Activated CD4-positive, alpha-beta T cell treated with anti-CD3 and anti-CD28 coated beads for 36 hours (primary cell): ENCODE measurements at regions of chr18 and their contacts with region 1.

Region 1: GRCh38 chr18:69958422-69958821 is 10.7 kb upstream of the CD226 start:
- DNase-seq: peak; percentile 72
- ATAC-seq: peak; percentile 73
- H3K4me3 Mint-ChIP-seq: no peak overlapping the region
- H3K27ac Mint-ChIP-seq: no peak overlapping the region
- H3K4me1 Mint-ChIP-seq: peaks cover 13% of the 10 kb centered on the region
- H3K27me3 Mint-ChIP-seq: no peaks in the 10 kb centered on the region

Region 2: DNA sequence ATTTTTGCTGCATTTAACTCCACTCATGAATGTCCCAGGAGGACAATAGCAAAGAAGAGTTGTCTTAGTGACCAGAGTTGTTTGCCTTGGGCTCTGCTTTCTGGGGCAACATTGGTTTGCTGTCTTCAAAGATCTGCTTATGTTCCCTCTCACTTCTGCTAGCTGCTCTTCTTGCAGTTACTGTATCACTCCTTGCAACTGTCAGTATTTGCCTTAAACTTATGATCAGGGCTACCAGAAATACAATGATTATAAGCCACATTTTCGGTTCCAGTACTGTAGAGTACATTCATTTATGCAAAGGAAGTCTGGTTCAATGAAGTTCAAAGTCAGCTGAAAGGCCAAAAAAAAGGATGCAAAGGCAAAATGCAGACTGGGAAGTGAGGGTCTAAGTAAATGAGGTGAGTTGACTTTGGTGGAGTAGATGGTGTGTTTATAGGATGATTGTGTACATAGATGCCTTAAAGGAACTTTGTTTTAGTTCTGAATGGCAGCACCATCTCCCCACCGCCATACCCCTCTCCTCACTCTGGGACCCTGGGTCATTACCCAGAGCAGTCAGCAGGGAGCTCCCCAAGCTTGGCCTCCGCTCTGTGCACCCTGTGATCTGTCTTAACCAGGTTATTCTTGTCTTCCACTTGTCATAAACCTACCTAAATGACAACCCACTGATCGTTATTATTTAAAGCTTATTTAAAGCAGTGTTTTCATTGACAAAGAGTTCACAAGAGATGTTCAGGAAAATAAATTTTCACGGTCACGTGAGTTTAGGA is 321.7 kb before region 1 on chr18:
- CTCF ChIA-PET with region 1: no interaction called
- POLR2A ChIA-PET with region 1: no interaction called
- intact Hi-C with region 1: loop called in 1 of 2 experiments (anchors 5 kb)
- DNase-seq: peak; percentile 54
- ATAC-seq: peak; percentile 73
- H3K4me3 Mint-ChIP-seq: no peak overlapping the region
- H3K27ac Mint-ChIP-seq: no peak overlapping the region
- H3K4me1 Mint-ChIP-seq: no peaks in the 10 kb centered on the region
- H3K27me3 Mint-ChIP-seq: peaks cover 2% of the 10 kb centered on the region

Region 3: DNA sequence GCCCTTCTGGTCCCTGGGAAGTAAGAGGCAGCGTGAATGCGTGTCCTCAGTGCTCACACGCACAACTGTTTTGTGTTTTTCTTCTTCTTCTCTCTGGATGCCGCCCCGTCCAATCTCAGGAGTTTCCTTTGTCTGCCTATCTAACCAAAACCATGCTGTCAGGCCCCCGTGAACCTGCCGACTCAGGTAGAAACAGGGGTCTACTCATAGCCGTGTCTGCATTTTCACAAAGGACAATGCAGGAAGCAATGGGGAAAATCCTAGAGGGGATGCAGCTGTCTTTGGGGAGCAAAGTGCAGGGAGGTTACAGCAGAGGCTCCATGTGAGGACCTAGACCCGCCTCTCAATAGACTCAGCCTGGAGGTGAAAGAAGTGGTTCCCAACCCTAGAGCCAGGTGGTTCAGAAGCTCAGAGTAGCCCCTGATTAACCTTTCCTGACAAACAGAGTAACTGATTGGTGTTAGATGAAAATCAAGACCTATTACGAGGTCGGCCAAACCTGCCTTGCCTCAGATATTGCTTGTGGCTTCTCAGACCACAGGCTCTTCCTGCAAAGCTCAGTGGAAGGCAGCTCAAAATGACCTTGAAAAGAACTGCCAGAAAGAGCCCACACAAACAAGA is 60.1 kb before region 1 on chr18:
- CTCF ChIA-PET with region 1: interaction called, 14 read pairs
- POLR2A ChIA-PET with region 1: interaction called, 18 read pairs
- intact Hi-C with region 1: loop called (anchors 1 kb)
- DNase-seq: peak; percentile 56
- ATAC-seq: peak; percentile 17
- H3K4me3 Mint-ChIP-seq: peak overlapping the region; percentile 67
- H3K27ac Mint-ChIP-seq: peak overlapping the region; percentile 94
- H3K4me1 Mint-ChIP-seq: peaks cover 74% of the 10 kb centered on the region
- H3K27me3 Mint-ChIP-seq: no peaks in the 10 kb centered on the region

Region 4: GRCh38 chr18:69943021-69943420 is 15.4 kb before region 1 on chr18:
- CTCF ChIA-PET with region 1: interaction called, 10 read pairs
- POLR2A ChIA-PET with region 1: interaction called, 18 read pairs
- intact Hi-C with region 1: loop called in 1 of 2 experiments (anchors 1 kb)
- DNase-seq: peak; percentile 44
- ATAC-seq: peak; percentile 20
- H3K4me3 Mint-ChIP-seq: no peak overlapping the region
- H3K27ac Mint-ChIP-seq: peak overlapping the region; percentile 83
- H3K4me1 Mint-ChIP-seq: peaks cover 82% of the 10 kb centered on the region
- H3K27me3 Mint-ChIP-seq: no peaks in the 10 kb centered on the region

Region 5: GRCh38 chr18:70072678-70073077 is 114.3 kb after region 1 on chr18:
- CTCF ChIA-PET with region 1: interaction called, 3 read pairs
- POLR2A ChIA-PET with region 1: no interaction called
- intact Hi-C with region 1: loop called in 1 of 2 experiments (anchors 10 kb)
- DNase-seq: no peak
- ATAC-seq: no peak
- H3K4me3 Mint-ChIP-seq: no peak overlapping the region
- H3K27ac Mint-ChIP-seq: no peak overlapping the region
- H3K4me1 Mint-ChIP-seq: no peaks in the 10 kb centered on the region
- H3K27me3 Mint-ChIP-seq: no peaks in the 10 kb centered on the region

Region 6: DNA sequence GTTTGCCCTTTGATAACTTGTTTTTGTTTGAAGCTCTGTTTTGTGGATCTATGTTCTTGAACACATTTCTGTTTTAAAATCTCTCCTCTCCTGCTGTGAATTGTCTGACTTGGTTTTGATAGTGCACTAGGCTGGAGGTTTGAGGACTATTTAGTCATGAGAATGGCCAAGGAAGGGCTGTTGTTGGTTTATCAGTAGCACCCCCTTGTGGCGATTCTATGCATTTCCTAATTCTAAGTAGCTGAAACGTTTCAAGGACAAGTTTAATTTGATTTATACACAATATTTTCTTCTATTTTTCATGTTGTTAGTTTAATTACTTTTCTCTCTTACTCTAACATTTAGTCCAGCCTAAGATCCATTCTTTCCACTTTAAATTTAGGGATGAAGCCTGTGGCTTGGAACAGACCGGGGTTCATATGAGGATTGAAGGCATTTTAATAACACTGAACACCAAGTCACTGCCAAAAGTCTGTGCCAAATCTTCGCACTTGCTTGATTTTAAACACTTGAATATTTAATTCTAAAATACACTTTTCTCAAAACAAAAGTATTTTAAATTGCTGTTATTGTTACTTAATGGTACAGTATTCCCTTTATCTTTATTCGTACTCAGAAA is 496.4 kb after region 1 on chr18:
- CTCF ChIA-PET with region 1: no interaction called
- POLR2A ChIA-PET with region 1: no interaction called
- intact Hi-C with region 1: no loop called
- DNase-seq: peak; percentile 52
- ATAC-seq: peak; percentile 76
- H3K4me3 Mint-ChIP-seq: no peak overlapping the region
- H3K27ac Mint-ChIP-seq: no peak overlapping the region
- H3K4me1 Mint-ChIP-seq: no peaks in the 10 kb centered on the region
- H3K27me3 Mint-ChIP-seq: peaks cover 2% of the 10 kb centered on the region